Ascending aorta (tissue), 2 donors: ENCODE measurements at regions of chr5 and their contacts with region 1.

Region 1: DNA sequence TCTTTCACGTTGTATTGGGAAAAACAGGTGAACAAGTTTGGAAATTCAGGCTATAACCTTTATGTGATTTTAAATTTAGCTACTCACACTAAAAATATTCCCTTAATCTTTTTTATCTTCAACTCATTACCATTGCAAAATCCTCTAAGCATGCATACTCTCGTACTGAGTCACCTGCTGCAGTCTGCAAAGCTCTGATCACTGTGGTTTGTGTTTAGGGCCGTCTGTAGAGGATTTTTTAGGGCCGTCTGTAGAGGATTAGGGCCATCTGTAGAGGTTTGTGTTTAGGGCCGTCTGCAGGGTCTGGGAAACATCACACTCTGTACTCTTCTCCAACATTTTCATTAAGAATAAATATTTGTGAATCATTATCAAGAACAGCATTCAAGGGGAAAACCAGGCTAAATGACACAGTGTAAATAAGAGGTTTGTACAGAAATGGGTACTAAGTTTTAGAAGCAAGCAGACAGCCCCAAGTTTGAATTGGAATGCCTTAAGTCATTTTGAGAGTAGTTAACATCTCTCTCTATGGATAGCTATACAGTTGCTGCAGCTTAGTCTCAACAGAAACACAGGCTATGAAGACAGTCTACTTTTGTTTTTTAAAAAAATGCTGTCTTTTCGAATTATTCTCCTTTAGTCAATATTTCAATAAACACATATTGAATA is 155.0 kb upstream of the TSLP start:
- DNase-seq: no peak
- H3K4me3 ChIP-seq: no peak overlapping the region
- H3K27ac ChIP-seq: peak overlapping the region; percentile 24 to 60
- H3K4me1 ChIP-seq: peaks cover 0 to 30% of the 10 kb centered on the region in 2 donors
- H3K27me3 ChIP-seq: no peaks in the 10 kb centered on the region
- CTCF ChIP-seq: no peak

Region 2: GRCh38 chr5:111072949-111073682 is 156.6 kb after region 1 on chr5:
- intact Hi-C with region 1: loop called (anchors 5 kb)
- DNase-seq: peak in 1 of 2 donors; percentile 69
- H3K4me3 ChIP-seq: peak overlapping the region; percentile 64 to 83
- H3K27ac ChIP-seq: peak overlapping the region; percentile 30 to 37
- H3K4me1 ChIP-seq: peaks cover 3 to 6% of the 10 kb centered on the region in 2 donors
- H3K27me3 ChIP-seq: no peaks in the 10 kb centered on the region
- CTCF ChIP-seq: no peak